Tibial artery (tissue), 4 donors: ENCODE measurements at regions of chr2 and their contacts with region 1.

Region 1: GRCh38 chr2:54899576-54900200 is 150.6 kb downstream of the RTN4 start:
- DNase-seq: no peak
- H3K4me3 ChIP-seq: no peak overlapping the region
- H3K27ac ChIP-seq: no peak overlapping the region
- H3K4me1 ChIP-seq: no peaks in the 10 kb centered on the region
- H3K27me3 ChIP-seq: no peaks in the 10 kb centered on the region
- CTCF ChIP-seq: peak; percentile 45 to 56

Region 2: DNA sequence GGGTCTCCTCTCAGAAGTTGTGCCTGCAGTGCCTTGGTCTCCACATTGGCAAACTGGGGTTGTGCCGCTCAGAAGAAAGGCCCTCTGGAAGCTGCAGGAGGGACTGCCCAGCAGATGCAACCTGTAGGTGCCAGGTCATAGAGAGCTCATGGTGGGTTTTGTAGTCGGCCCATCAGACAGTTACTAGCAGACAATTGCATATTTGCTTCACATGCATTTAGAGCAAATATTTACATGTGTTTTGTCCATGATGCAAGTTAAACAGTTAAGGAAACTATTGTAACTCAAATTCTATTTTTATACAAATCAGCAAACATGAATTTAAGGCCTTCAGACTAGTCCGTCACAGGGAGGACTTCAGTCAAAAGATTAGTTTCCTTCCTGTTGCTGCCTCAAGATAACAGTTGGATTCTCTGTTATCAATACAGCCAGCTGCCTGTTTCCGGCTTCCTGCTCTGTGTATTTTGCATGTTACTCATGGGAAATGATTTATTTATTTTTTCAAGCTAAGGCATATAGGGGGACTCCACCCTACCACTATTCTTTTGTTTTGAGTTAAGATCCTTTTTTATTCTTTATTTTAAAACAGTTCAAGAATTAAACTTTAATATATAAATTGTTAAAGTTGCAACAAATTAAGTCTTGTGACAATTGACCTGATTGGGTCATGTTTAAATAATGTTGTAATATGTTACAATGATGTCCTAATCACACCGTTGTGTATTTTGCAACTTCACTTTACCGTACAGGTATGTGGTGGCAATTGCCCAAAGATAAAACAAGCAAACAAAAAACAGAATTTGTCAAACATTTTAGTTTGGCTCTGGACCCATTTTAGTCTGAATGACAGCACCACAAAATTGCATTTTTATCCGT is 310.1 kb before region 1 on chr2:
- intact Hi-C with region 1: no loop called
- DNase-seq: no peak
- H3K4me3 ChIP-seq: no peak overlapping the region
- H3K27ac ChIP-seq: no peak overlapping the region
- H3K4me1 ChIP-seq: peaks cover 0 to 29% (median 10%) of the 10 kb centered on the region in 4 donors
- H3K27me3 ChIP-seq: no peaks in the 10 kb centered on the region
- CTCF ChIP-seq: no peak

Region 3: DNA sequence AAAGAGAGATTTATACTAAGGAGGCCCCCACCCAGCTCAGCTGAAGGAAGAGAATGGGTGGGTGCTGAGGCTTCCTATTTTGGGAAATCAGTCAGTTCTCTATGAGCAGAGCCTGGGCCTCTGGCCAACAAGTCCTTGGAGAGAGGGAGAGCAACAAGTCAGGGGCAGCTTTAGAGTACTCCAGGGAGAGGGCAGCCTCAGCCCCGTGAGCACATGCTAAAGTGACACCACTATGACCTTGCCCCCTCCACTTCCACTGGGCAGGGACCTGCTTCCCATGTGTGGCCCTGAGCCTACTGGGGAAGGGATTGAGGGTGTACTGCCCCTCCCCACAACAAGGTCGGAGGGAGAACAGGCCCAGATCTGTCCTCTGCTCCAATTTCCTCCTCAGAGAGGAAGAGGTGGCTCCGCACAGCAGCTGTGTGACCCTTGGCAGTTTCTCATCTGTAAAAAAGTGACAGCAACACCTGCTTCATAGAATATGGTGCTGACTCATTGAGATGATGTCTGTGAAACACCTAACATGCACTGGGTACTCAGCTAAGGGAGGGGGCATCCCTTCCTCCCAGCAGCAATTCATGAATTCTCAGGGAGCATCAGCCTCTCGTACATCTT is 259.5 kb after region 1 on chr2:
- intact Hi-C with region 1: no loop called
- DNase-seq: peak; percentile 77 to 88
- H3K4me3 ChIP-seq: no peak overlapping the region
- H3K27ac ChIP-seq: peak overlapping the region; percentile 68 to 78
- H3K4me1 ChIP-seq: peaks cover 6 to 78% (median 68%) of the 10 kb centered on the region in 4 donors
- H3K27me3 ChIP-seq: no peaks in the 10 kb centered on the region
- CTCF ChIP-seq: no peak

Region 4: DNA sequence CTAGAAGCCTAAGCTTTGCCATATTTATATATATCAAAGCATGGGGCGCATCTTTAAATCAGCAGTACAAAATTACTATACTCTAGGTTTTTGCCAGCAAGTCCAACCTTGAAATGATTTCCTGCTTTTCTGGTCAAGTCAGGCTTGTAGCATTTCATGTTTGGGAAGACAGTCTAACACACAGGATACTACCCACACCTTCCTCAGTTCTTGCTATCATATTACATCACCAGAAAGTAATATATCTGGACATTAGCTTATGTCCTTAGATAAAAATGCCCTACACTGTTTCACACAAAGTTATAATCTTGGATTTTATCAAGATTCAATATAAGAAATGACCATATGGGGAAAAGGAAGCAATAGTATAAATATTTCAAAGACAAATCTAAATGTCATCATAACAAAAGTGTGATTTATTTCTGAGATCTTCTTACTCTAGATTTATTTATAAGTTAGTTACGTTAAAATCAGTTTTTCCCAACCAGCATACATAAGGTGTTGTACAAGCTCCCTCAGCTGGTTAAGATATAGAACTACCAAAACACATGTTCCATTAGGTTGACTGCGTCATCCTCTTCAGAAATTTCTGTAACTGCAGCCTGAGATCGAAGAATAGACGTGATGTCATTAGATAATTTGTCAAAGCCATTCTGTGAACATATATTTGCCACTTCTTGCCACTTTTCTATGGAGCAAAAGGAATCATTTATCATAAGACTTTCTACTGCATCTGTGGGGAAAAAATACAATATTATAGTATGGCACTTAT is 275.8 kb after region 1 on chr2:
- intact Hi-C with region 1: loop called (anchors 5 kb)
- DNase-seq: no peak
- H3K4me3 ChIP-seq: no peak overlapping the region
- H3K27ac ChIP-seq: no peak overlapping the region
- H3K4me1 ChIP-seq: peaks cover 0 to 17% (median 0%) of the 10 kb centered on the region in 4 donors
- H3K27me3 ChIP-seq: no peaks in the 10 kb centered on the region
- CTCF ChIP-seq: peak; percentile 54 to 80